ENCODE measurements at regions of chr10 and their contacts with region 1.

Region 1: DNA sequence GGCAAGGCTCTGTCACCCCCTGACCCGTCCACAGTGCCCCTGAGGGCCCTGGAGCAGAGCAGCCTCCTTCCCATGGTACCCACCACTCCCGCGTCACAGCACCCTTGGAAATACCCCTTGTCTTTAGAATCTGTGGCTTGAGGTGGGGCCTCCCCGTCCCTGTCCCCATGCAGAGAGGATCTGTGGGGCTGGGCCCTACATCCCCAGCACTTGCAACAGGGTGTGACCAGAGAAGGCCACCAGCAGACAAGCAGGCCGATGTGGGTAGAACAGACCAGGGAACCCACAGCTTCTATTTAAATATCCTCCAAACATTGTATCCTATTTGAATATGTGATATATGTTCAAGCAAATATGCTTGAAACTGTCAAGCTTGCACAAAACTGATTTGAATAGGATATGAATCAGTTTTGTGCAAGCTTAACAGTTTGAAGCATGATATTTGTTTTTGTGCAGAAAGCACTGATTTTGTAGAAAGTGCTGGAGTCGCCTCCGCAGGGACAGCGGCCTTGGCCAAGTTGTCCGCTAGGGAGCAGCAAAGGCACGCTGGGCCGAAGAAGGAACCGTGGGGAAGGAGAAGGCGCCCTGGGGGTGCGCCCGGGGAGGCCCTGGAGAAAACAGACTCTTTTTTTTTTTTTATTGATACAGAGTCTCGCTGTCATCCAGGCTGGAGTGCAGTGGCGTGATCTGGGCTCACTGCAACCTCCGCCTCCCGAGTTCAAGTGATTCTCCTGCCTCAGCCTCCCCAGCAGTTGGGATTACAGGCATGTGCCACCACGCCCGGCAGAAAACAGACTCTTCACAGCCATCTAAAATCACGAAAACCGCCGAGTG is 2.2 kb downstream of the CFAP46 start:
- DNase-seq: peak; percentile 46 to 68
- ATAC-seq: peak in 3 of 4 donors; percentile 56 to 72 (median 62)
- H3K4me3 ChIP-seq: no peak overlapping the region
- H3K27ac ChIP-seq: no peak overlapping the region
- H3K4me1 ChIP-seq: peaks cover 8% of the 10 kb centered on the region
- H3K27me3 ChIP-seq: peaks cover 0 to 47% (median 16%) of the 10 kb centered on the region in 3 donors
- CTCF ChIP-seq: peak; percentile 72

Region 2: GRCh38 chr10:132836832-132837540 is 103.2 kb before region 1 on chr10:
- intact Hi-C with region 1: no loop called
- DNase-seq: peak in 1 of 2 donors; percentile 75
- ATAC-seq: peak; percentile 71 to 83 (median 74)
- H3K4me3 ChIP-seq: peak overlapping the region; percentile 67
- H3K27ac ChIP-seq: peak overlapping the region; percentile 93
- H3K4me1 ChIP-seq: no peaks in the 10 kb centered on the region
- H3K27me3 ChIP-seq: peaks cover 0 to 16% (median 9%) of the 10 kb centered on the region in 3 donors
- CTCF ChIP-seq: peak; percentile 98

Region 3: DNA sequence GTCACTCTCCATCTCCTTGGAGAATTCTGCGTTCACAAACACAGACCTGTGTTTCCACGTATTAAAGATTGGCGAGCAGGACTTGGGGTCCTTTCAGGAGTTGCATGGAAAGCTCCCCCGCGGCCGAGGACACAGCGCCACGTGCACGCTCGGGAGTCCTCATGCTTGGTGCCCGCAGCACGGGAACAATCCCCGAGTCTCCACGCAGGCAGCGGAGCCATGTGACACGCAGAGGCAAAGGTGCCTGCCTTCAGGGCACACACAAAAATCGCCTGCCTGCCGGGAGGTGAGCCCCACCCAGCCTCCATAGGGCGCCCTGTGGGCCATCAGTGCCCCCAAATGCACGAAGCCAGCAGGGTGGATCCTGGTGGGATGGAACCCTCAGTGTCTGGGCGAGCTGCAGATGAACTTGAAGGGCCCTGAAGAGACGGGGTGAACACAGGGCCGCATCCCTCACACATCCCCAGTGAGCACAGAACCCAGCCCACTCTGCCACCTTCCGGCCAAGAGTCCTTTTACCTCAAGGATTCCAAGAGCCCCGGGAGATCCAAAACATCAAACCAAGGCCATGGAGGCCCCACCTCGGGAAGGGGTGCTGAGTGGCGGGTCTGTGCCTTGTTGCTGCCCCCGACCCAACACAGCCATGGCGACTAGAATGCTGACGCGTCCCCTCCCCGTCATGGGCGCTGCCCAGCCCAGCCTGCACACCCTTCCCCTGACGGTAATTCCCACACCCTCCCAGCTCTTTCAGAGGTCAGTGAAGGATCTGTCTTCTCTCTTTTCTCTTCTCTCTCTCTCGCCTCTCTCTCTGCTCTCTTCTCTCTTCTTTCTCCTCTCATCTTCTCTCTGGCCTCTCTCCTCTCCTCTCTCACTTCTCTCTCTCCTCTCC is 53.7 kb before region 1 on chr10:
- intact Hi-C with region 1: no loop called
- DNase-seq: peak in 1 of 2 donors; percentile 39
- ATAC-seq: no peak
- H3K4me3 ChIP-seq: no peak overlapping the region
- H3K27ac ChIP-seq: no peak overlapping the region
- H3K4me1 ChIP-seq: no peaks in the 10 kb centered on the region
- H3K27me3 ChIP-seq: peaks cover 0 to 21% (median 12%) of the 10 kb centered on the region in 3 donors
- CTCF ChIP-seq: no peak

Region 4: GRCh38 chr10:133124357-133125211 is 184.4 kb after region 1 on chr10:
- intact Hi-C with region 1: loop called (anchors 1 kb)
- DNase-seq: peak; percentile 27 to 72
- ATAC-seq: peak; percentile 83 to 96 (median 92)
- H3K4me3 ChIP-seq: no peak overlapping the region
- H3K27ac ChIP-seq: no peak overlapping the region
- H3K4me1 ChIP-seq: no peaks in the 10 kb centered on the region
- H3K27me3 ChIP-seq: peaks cover 0 to 3% (median 2%) of the 10 kb centered on the region in 3 donors
- CTCF ChIP-seq: peak; percentile 85

Measured in psoas muscle (tissue), 8 donors.